ENCODE measurements at regions of chr19 and their contacts with region 1.

Region 1: DNA sequence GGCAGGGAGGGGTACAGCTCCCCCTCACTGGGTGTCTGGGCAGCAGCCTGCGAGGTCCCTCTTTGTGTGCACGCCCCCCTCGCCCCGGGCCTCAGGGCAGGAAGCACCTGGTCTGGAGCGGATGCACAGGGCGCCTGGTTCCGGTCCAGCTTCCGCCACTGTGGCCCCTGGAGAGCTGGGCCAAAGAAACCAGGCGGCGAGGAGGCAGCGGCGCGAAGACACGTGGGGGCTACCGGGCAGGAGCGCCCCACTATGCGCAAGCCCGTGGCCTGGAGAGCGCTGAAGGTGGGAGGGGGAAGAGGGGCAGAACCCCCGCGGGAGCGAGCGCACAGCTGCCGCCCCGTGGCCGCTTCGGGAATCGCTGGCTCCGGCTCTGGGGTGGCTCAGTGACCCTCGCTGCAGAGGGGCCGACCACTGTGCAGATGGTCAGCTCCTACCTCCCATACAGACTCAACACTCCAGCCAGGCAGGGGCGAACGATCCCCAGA is 1.7 kb upstream of the LYL1 start:
- DNase-seq: peak; percentile 83
- ATAC-seq: peak; percentile 38
- H3K4me3 Mint-ChIP-seq: peak overlapping the region; percentile 93
- H3K27ac Mint-ChIP-seq: peak overlapping the region; percentile 92
- H3K4me1 Mint-ChIP-seq: peaks cover 21% of the 10 kb centered on the region
- H3K27me3 Mint-ChIP-seq: no peaks in the 10 kb centered on the region

Region 2: DNA sequence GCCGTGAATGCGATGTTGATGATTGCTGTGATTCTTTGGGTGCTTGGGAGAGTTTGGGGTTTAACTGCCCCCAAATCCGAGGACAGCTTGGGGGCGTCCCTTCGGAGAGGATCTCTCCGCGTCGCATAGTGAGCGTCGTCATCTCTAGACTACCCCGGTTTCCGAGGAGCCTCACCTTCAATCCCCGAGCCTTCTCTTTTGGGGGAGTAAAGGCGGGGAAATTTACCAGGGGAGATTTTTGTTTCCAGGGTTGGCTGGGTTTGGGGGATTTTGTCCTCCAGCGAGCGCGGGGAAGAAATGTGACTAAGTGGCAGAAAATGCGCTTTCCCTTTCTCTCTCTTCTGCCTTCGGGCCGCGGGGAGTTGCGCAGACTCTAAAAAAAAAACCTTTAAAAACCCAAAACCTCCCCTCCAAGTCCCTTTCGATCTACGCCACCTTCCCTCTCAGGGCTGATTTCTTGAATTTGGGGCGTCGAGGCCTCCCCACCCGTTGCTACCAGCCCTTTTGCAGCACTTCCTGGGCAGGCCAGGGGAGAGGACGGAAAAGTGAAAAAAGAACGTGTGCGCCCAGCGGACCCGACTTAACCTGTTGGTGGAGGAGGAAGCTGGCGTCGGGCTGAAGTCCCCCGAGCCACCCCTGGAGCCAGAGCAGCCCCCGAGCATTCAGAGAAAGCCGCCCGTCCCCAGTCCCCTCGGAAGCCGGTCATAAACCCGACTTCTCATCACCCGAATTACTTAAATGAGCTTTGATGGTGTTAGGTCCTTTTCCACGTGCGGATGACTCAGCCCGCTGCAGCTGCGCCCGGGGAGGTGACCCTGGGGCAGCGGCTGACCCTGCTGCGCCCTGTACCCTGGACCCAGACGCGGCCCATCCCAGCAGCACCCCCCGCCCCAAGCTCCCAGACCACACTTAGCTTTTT is 91.5 kb before region 1 on chr19:
- POLR2A ChIA-PET with region 1: no interaction called
- DNase-seq: no peak
- ATAC-seq: peak; percentile 55
- H3K4me3 Mint-ChIP-seq: peak overlapping the region; percentile 89
- H3K27ac Mint-ChIP-seq: peak overlapping the region; percentile 76
- H3K4me1 Mint-ChIP-seq: peaks cover 19% of the 10 kb centered on the region
- H3K27me3 Mint-ChIP-seq: peaks cover 67% of the 10 kb centered on the region

Region 3: DNA sequence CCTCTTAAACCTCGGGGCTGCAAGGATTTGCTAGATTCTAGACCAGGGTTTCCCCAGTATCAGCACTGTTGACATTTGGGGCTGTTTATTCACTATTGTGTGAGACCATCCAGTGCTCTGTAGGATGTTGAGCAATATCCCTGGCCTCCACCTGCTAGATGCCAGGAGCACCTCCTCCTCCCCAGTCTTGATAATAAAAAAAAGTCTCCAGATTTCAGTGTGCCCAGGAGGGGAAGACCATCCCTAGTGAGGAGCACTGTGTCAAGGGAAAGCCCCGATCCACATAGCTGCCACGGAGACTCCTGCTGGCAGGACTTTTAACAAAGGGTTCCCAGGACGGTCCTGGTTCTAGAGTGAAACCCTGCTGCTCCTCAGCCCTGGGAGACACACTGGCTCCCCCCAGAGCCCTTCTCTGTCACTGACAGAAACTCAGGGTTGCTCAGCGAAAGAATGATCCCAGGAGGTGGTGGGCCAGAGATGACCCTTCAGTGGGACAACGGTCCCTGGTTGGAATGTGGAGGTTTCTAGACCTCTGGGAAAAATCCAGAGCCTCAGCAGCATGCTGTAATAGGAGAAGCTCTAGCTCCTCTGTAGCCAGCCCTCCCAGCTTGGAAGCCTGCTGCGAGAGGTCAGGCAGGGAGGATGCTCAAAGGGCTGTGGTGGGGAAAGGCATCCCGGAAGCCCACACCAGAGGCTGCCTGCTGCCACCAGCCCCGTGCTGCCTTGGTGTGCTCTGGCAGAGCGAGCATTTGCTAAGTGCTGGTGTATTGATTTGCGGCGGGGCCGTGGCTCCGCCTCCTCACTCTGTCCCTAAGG is 22.0 kb before region 1 on chr19:
- POLR2A ChIA-PET with region 1: no interaction called
- DNase-seq: no peak
- ATAC-seq: no peak
- H3K4me3 Mint-ChIP-seq: no peak overlapping the region
- H3K27ac Mint-ChIP-seq: no peak overlapping the region
- H3K4me1 Mint-ChIP-seq: no peaks in the 10 kb centered on the region
- H3K27me3 Mint-ChIP-seq: peaks cover 2% of the 10 kb centered on the region

Region 4: DNA sequence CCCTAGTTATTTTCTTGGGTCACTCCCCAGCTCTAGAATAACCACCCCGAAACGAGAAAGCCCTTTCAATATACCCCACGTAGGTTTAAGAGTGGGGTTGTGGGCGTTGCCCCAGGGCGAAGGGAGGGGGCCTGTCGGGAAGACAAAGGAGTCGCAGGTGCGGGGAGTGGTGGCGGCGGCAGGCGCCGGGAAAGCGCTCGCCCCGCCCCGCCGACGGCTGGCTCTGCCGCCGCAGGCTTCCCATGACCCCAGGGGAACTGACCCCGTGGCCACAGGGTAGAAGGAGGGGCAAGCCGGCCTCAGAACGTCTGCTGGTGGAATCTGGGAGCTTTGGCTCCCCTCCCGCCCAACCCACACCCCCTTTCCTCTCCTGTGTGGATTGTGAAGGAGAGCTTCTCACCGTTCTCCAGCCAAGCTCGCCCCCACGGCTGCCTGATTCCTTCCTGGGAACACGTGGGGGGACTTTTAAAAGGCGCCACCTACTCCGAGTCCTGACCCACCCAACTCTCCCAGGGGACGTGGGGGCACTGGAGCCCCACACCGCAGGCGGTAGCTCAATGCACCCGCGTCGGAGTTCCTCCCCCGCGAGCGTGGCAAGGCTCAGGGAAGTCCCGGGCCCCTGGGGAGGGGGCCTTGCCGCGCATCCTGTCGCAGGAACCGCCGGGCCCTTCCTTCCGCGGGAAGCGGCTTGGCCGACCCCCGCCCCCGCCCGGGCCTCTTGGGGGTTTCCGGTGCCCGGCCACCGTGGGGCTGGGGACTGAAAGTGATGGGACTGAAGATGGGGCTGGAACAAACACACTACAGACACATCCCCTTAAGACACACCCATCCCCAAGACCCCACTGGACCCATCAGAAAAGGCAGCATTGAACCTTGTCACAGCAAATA is 51.3 kb after region 1 on chr19:
- POLR2A ChIA-PET with region 1: interaction called, 15 read pairs
- DNase-seq: peak; percentile 87
- ATAC-seq: peak; percentile 16
- H3K4me3 Mint-ChIP-seq: peak overlapping the region; percentile 98
- H3K27ac Mint-ChIP-seq: peak overlapping the region; percentile 100
- H3K4me1 Mint-ChIP-seq: peaks cover 37% of the 10 kb centered on the region
- H3K27me3 Mint-ChIP-seq: no peaks in the 10 kb centered on the region

Region 5: GRCh38 chr19:13162518-13163314 is 58.3 kb after region 1 on chr19:
- POLR2A ChIA-PET with region 1: interaction called, 10 read pairs
- DNase-seq: peak; percentile 91
- ATAC-seq: peak; percentile 59
- H3K4me3 Mint-ChIP-seq: peak overlapping the region; percentile 92
- H3K27ac Mint-ChIP-seq: peak overlapping the region; percentile 96
- H3K4me1 Mint-ChIP-seq: peaks cover 52% of the 10 kb centered on the region
- H3K27me3 Mint-ChIP-seq: no peaks in the 10 kb centered on the region